ENCODE measurements at regions of chr17 and their contacts with region 1.

Region 1: DNA sequence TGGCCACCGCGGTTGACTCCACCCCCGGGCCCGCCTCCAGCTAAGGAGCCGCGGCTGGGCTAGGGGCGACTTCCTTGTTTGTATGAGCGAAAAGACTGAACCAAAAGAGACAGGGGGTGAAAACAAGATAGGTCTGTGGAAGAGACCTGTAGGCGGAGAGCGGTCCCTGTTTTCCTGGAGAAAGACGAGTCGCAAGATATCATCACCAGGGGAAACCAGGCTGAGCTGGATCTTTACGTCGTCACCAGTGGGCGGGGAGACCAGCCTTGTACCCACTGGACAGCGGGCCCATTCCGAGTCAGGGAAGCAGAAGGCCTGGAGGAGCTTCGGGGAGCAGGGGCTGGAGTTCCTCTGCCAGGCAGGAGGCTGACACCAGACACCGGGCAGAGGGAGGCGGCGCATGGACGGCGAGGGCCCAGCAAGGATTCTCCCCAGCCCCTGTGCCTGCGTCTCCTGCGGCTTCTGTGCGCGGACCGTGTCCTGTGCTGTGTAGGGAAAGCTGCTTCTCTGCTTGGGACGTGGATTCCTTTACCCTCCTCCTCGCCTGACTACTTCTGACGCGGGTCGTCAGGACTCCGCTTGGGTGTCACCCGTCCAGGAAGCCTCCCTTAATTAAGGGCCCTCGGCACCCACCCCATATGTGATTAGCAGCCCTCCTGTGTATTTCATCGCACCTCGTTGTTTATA is 10.3 kb upstream of the ARL4D start:
- DNase-seq: no peak
- H3K4me3 ChIP-seq: peak overlapping the region; percentile 65
- CTCF ChIP-seq: no peak

Region 2: GRCh38 chr17:43094129-43094835 is 294.2 kb before region 1 on chr17:
- CTCF ChIA-PET with region 1: no interaction called
- POLR2A ChIA-PET with region 1: no interaction called
- DNase-seq: no peak
- H3K4me3 ChIP-seq: no peak overlapping the region
- CTCF ChIP-seq: no peak

Region 3: DNA sequence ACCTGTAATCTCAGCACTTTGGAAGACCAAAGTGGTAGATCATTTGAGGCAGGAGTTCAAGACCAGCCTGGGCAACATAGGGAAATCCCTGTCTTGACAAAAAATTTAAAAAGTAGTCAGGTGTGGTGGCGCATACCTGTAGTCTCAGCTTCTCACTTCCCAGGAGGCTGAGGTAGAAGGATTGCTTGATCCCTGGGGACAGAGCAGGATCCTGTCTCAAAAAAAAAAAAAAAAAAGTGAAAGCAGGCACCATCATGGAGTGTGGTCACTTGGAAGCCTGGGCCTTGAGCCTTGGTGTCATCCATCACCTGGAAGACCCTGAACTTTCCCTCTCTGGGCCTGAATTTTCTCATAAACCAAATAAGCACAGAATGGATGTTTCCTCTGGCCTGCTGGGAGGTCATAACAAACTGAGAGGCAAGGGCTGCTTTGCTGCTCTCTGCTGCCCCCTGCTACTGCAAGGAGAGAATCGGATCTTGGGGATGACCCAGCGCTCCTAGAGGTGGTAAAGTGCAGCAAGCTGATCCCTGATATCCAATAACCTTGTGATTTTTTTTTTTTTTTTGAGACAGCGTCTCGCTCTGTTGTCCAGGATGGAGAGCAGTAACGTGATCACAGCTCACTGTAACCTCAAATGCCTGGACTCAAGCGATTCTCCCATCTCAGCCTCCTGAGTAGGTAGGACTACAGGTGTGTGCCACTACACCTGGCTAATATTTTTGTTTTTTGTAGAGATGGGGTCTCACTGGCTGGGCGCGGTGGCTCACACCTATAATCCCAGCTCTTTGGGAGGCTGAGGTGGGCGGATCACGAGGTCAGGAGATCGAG is 78.8 kb before region 1 on chr17:
- CTCF ChIA-PET with region 1: no interaction called
- POLR2A ChIA-PET with region 1: no interaction called
- DNase-seq: no peak
- H3K4me3 ChIP-seq: no peak overlapping the region
- CTCF ChIP-seq: no peak

Region 4: DNA sequence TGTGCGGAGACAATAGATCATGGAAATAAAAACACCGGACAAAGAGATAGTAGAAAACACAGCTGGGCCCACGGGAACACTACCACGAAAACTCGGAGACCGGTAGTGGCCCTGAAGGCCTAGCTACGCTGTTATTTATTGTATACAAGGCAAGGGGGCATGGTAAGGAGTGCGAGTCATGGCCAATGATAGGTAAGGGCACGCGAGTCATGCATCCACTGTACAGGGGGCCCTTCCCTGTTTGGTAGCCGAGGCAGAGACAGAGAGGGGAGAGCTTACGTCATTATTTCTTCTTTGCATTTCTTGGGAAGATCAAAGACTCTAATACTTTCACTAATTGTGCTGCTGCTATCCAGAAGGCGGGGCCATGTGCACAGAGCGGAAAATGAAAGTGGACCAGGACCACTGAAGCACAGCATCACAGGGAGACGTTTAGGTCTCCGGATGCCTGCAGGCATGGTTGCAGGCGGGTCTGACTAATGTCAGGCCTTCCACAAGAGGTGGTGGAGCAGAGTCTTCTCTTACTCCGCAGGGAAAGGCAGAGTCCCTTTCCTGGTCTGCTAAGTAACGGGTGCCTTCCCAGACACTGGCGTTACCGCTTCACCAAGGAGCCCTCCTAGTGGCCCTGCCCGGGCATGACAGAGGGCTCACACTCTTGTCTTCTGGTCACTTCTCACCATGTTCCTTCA is 64.2 kb before region 1 on chr17:
- CTCF ChIA-PET with region 1: no interaction called
- POLR2A ChIA-PET with region 1: no interaction called
- DNase-seq: no peak
- H3K4me3 ChIP-seq: no peak overlapping the region
- CTCF ChIP-seq: no peak

Region 5: DNA sequence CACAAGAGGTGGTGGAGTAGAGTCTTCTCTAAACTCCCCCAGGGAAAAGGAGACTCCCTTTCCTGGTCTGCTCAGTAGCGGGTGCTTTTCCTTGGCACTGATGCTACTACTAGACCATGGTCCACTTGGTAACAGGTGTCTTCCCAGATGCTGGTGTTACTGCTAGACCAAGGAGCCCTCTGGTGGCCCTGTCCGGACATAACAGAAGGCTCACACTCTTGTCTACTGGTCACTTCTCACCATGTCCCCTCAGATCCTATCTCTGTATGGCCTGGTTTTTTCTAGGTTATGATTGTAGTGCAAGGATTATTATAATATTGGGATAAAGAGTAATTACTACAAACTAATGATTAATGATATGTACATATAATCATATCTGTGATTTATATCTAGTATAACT is 39.4 kb before region 1 on chr17:
- CTCF ChIA-PET with region 1: no interaction called
- POLR2A ChIA-PET with region 1: no interaction called
- DNase-seq: no peak
- H3K4me3 ChIP-seq: no peak overlapping the region
- CTCF ChIP-seq: no peak

Region 6: DNA sequence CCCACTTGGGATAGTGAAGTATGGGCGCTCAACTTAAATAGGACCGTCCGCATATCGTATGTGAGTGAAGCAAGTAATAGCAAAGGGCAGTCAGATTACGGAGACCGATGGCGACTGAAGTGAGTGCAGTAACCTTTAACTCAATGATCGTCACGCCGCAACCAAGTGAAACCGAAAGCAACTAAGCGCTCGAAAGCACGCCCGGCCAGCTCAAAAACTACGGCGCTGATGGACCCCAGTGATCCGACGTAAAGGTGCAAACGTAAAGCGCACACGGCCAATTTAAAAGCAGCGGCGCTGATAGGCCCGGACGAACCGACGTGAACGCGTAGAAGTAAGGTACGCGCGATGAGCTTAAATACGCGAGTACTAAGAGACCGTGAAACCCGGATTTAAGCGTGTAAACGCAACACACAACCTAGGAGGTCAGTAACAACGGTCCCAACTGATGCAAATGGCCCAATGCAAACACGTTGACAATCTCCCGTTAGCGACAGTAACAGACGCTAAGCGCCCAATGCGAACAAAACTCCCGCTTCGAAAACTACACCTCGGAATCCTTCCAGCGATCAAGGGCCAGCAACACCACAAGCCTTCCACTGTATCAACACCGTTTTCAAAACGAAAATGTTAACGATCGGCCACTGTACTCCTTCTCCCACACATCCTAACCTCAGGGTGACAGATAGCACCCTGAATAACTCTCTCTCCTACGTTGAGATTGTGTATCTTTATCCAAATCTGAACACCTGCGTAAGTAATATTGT is 27.6 kb before region 1 on chr17:
- CTCF ChIA-PET with region 1: interaction called, 3 read pairs
- POLR2A ChIA-PET with region 1: interaction called, 27 read pairs
- DNase-seq: peak; percentile 99
- H3K4me3 ChIP-seq: peak overlapping the region; percentile 58
- CTCF ChIP-seq: no peak

Measured in AG04449 (cell line).